CD8-positive, alpha-beta T cell (primary cell): ENCODE measurements at regions of chr9 and their contacts with region 1.

Region 1: GRCh38 chr9:27162045-27162444 is 53.0 kb downstream of the TEK start:
- DNase-seq: no peak
- ATAC-seq: no peak
- H3K4me3 ChIP-seq: no peak overlapping the region
- H3K4me3 Mint-ChIP-seq: no peak overlapping the region
- H3K27ac ChIP-seq: no peak overlapping the region
- H3K27ac Mint-ChIP-seq: no peak overlapping the region
- H3K4me1 ChIP-seq: no peaks in the 10 kb centered on the region
- H3K4me1 Mint-ChIP-seq: no peaks in the 10 kb centered on the region
- H3K27me3 ChIP-seq: no peaks in the 10 kb centered on the region
- H3K27me3 Mint-ChIP-seq: peaks cover 4% of the 10 kb centered on the region
- CTCF ChIP-seq: no peak

Region 2: GRCh38 chr9:27094640-27095298 is 67.3 kb before region 1 on chr9:
- CTCF ChIA-PET with region 1: no interaction called
- POLR2A ChIA-PET with region 1: no interaction called
- intact Hi-C with region 1: loop called in 1 of 2 experiments (anchors 10 kb)
- DNase-seq: no peak
- ATAC-seq: no peak
- H3K4me3 ChIP-seq: no peak overlapping the region
- H3K4me3 Mint-ChIP-seq: no peak overlapping the region
- H3K27ac ChIP-seq: no peak overlapping the region
- H3K27ac Mint-ChIP-seq: no peak overlapping the region
- H3K4me1 ChIP-seq: no peaks in the 10 kb centered on the region
- H3K4me1 Mint-ChIP-seq: no peaks in the 10 kb centered on the region
- H3K27me3 ChIP-seq: no peaks in the 10 kb centered on the region
- H3K27me3 Mint-ChIP-seq: peaks cover 22% of the 10 kb centered on the region
- CTCF ChIP-seq: no peak

Region 3: GRCh38 chr9:27108981-27109541 is 53.0 kb before region 1 on chr9 and contains the start of gene TEK:
- CTCF ChIA-PET with region 1: no interaction called
- POLR2A ChIA-PET with region 1: no interaction called
- intact Hi-C with region 1: no loop called
- DNase-seq: no peak
- ATAC-seq: no peak
- H3K4me3 ChIP-seq: no peak within 1 kb of the TSS
- H3K4me3 Mint-ChIP-seq: no peak within 1 kb of the TSS
- H3K27ac ChIP-seq: no peak within 1 kb of the TSS
- H3K27ac Mint-ChIP-seq: no peak within 1 kb of the TSS
- H3K4me1 ChIP-seq: no peaks in the 10 kb centered on the region
- H3K4me1 Mint-ChIP-seq: no peaks in the 10 kb centered on the region
- H3K27me3 ChIP-seq: peaks cover 0 to 3% of the 10 kb centered on the region in 2 experiments
- H3K27me3 Mint-ChIP-seq: no peaks in the 10 kb centered on the region
- CTCF ChIP-seq: no peak
- total RNA-seq, gene TEK: not detected

Region 4: DNA sequence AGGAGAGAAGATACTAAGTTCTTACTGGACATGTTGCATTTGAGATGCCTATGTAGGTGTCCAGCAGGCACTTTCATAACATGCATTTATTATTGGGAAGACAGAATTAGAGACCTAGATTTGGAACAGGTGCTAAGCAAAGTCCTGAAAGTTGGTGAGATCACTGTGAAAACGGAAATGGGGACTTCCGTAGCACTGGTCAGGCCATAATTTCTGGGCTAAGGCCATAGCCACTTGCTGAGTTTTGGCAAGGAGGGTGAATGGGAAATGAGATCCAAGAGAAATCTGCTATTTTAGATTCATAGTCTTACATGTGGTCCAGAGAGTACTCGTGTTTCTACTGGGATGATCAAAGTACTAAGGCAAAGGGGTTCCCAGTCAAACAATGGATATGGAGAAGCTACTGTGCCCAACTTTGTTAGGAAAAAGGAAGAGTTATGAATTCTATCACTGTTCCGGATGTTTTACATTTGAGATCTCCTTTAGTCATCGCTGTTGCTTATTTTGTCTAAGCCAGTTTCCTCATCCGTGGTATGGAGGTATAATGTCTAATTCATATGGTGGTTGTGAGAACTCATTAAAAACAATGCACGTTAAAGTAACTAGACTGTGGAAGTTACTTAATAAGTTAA is 19.6 kb before region 1 on chr9:
- CTCF ChIA-PET with region 1: no interaction called
- POLR2A ChIA-PET with region 1: no interaction called
- intact Hi-C with region 1: no loop called
- DNase-seq: no peak
- ATAC-seq: no peak
- H3K4me3 ChIP-seq: no peak overlapping the region
- H3K4me3 Mint-ChIP-seq: no peak overlapping the region
- H3K27ac ChIP-seq: no peak overlapping the region
- H3K27ac Mint-ChIP-seq: no peak overlapping the region
- H3K4me1 ChIP-seq: no peaks in the 10 kb centered on the region
- H3K4me1 Mint-ChIP-seq: no peaks in the 10 kb centered on the region
- H3K27me3 ChIP-seq: no peaks in the 10 kb centered on the region
- H3K27me3 Mint-ChIP-seq: peaks cover 2% of the 10 kb centered on the region
- CTCF ChIP-seq: no peak

Region 5: DNA sequence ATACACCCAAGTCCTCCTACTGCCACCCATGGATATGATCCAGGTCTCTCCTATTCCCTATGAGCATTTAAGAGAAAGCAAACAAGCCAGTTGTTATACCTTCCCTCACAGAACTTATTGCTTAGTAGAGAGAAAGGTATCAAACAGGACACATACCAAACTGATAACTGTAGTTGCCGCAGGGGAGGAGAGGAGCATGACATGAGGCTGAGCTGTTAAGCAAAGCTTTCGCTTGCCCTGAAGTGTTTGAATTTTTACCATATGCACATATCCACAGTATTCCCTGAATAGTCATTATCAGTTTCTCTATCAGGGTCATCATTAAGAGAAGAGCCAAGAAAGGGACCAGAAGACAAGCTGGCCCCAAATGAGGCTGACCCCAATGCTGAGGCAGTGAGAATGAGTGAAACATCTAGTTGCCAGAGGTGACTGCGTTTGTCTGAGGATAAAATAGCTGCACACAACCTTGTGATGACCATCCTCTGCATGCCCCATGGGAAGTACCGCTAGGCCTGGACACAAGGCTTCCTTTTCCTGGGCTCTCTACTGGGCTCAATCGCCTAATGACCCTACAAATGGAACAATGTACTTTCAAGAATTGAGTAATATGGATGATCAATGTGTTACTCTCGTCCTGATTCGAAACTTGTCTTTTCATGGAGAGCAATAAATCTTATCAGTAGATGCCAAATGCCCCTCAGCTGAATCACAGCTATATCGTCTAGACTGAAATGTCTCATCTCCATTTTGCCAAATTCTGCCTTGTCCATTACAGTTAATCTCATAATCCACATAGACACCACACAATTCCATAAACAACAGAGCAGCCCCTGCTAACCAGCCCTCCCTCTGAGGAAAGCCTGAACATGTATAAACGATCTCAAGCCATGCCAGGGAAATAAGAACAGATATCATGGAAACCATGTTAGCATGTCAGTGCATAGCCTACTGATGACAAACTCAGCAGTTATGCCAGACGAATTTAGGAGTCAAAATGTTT is 357.7 kb after region 1 on chr9:
- CTCF ChIA-PET with region 1: no interaction called
- POLR2A ChIA-PET with region 1: no interaction called
- intact Hi-C with region 1: no loop called
- DNase-seq: no peak
- ATAC-seq: no peak
- H3K4me3 ChIP-seq: no peak overlapping the region
- H3K4me3 Mint-ChIP-seq: no peak overlapping the region
- H3K27ac ChIP-seq: no peak overlapping the region
- H3K27ac Mint-ChIP-seq: no peak overlapping the region
- H3K4me1 ChIP-seq: no peaks in the 10 kb centered on the region
- H3K4me1 Mint-ChIP-seq: no peaks in the 10 kb centered on the region
- H3K27me3 ChIP-seq: no peaks in the 10 kb centered on the region
- H3K27me3 Mint-ChIP-seq: no peaks in the 10 kb centered on the region
- CTCF ChIP-seq: no peak